ENCODE measurements at regions of chr6 and their contacts with region 1.

Region 1: DNA sequence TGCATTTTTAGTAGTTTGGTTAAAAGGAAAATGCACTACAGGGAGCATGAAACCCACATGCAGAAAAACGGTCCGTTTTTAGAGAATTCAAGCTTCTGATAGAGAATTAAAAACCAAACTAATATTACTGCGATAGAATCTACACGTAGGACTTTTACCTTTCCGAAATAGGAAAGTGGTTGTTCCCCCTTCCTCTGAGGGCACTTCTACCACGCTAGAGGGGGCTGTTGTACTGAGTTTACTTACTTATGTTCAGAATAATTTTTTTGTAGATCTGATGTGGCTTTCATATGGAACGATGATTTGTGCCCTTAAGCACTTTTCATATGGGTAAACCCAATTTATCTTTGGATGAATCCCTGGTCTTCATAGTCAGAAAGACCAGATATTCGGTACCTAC is 264.3 kb upstream of the PLN start:
- DNase-seq: peak in 4 of 5 donors; percentile 28 to 62 (median 33)
- H3K4me3 ChIP-seq: no peak overlapping the region
- H3K27ac ChIP-seq: no peak overlapping the region
- H3K4me1 ChIP-seq: no peaks in the 10 kb centered on the region
- H3K27me3 ChIP-seq: no peaks in the 10 kb centered on the region
- CTCF ChIP-seq: peak; percentile 36 to 64 (median 42)
- EP300 ChIP-seq: no peak
- POLR2A ChIP-seq: no peak

Region 2: DNA sequence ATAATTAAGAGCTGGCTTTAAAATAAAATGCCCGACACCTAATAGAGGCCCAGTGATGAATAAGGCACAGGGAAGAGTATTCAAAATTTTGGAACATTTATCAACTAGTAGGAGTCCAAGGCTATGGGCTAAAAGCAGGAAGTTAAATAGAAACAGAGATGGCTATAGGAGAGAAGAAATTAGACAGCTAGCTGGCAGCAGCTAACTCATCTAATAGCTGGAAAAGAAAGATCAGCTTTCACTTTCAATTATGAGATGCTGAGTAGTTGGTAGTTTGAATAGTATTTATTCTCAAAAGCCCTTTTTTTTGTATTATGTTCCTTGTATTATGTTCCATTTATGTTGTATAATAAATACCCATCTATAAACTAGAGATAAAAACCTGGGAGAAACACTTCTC is 161.0 kb before region 1 on chr6:
- intact Hi-C with region 1: no loop called
- DNase-seq: no peak
- H3K4me3 ChIP-seq: no peak overlapping the region
- H3K27ac ChIP-seq: no peak overlapping the region
- H3K4me1 ChIP-seq: no peaks in the 10 kb centered on the region
- H3K27me3 ChIP-seq: no peaks in the 10 kb centered on the region
- CTCF ChIP-seq: no peak
- EP300 ChIP-seq: no peak
- POLR2A ChIP-seq: no peak

Region 3: GRCh38 chr6:118509009-118509617 is 225.3 kb after region 1 on chr6:
- intact Hi-C with region 1: loop called in 1 of 4 experiments (anchors 2 kb)
- DNase-seq: no peak
- H3K4me3 ChIP-seq: no peak overlapping the region
- H3K27ac ChIP-seq: no peak overlapping the region
- H3K4me1 ChIP-seq: no peaks in the 10 kb centered on the region
- H3K27me3 ChIP-seq: no peaks in the 10 kb centered on the region
- CTCF ChIP-seq: peak in 1 of 3 donors; percentile 25
- EP300 ChIP-seq: no peak
- POLR2A ChIP-seq: no peak

Region 4: DNA sequence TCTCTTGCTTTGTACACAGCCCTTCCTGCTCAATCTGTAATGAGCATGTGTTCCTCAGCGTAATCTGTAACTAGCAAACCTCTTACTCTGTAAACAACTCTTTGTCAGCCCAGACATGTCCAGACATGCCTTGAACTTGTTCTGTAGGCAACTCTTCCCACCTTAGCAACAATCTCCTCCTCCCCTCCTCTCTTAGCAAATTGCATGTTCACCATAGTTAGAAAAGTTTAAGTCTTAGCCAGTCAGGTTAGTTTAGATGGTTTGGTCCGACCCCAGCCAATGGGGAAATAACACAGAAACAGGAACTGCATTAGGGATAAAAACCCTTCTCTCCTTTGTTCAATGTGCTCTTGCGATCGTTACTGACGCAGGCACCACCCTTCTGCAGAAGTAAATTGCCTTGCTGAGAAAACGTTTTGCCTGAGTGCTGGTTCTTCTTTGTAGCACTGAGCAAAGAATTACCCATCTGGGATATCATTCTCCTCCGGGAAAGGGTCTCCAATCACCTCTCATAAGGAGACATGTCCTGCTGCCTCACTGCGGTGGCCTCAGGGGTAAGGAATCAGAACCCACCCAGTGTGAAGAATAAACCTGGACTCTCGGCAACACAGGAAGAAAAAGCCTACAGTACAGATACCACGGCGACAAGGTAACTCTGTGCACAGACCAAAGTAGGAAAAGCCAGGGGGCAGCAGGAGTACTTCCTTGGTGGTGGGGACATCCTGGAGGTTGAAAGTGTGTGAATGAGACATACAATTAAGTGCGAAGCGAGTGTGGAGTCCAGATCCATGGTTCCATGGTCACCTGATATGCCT is 290.5 kb after region 1 on chr6:
- intact Hi-C with region 1: loop called in 1 of 4 experiments (anchors 10 kb)
- DNase-seq: no peak
- H3K4me3 ChIP-seq: no peak overlapping the region
- H3K27ac ChIP-seq: no peak overlapping the region
- H3K4me1 ChIP-seq: no peaks in the 10 kb centered on the region
- H3K27me3 ChIP-seq: no peaks in the 10 kb centered on the region
- CTCF ChIP-seq: no peak
- EP300 ChIP-seq: no peak
- POLR2A ChIP-seq: no peak

Region 5: DNA sequence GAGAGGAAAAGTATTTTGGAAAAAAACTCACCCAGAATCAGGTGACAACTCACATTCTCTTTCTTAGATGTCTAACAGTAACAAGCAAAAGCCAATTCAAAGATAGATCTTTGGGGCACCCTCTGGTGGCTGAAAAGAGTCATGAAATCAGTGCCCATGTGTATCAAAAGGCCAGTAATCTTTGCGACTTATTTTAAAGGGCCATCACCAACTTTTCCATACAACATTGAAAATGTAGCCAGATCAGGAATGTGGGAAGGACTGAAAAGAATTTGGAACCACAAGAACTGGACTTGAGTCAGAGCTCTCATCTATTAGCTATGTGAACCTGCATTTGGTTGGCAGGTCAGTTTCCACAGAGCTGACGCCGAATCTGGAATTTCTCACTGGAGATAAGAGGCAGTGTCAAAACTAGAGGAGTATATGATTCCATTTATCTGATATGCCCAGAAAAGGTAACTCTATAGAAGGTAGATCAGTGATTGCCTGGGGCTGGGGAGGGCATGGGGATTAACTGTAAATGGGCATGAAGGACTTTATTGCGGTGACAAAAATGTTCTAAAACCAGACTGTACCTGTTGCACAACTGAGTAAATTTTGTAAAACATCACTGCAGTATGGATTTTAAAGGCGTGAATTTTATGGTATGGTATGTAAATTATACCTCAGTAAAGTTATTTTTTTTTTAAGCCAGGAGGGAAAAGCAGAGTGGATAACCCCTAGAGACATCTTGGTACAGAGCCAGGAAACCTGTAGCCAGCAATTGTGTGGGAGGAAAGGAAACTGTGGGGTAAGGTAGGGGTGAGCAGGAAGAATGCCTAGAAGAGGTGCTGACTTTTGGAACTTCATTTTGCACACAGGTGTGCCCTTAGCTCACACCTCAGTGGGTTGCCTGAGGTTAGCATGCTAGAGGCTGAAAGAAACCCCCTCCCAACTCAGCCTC is 493.1 kb after region 1 on chr6:
- intact Hi-C with region 1: loop called in 1 of 4 experiments (anchors 10 kb)
- DNase-seq: peak; percentile 44 to 68 (median 54)
- H3K4me3 ChIP-seq: no peak overlapping the region
- H3K27ac ChIP-seq: no peak overlapping the region
- H3K4me1 ChIP-seq: peaks cover 2% of the 10 kb centered on the region
- H3K27me3 ChIP-seq: no peaks in the 10 kb centered on the region
- CTCF ChIP-seq: peak in 2 of 3 donors; percentile 61 to 67
- EP300 ChIP-seq: no peak
- POLR2A ChIP-seq: no peak

Region 6: DNA sequence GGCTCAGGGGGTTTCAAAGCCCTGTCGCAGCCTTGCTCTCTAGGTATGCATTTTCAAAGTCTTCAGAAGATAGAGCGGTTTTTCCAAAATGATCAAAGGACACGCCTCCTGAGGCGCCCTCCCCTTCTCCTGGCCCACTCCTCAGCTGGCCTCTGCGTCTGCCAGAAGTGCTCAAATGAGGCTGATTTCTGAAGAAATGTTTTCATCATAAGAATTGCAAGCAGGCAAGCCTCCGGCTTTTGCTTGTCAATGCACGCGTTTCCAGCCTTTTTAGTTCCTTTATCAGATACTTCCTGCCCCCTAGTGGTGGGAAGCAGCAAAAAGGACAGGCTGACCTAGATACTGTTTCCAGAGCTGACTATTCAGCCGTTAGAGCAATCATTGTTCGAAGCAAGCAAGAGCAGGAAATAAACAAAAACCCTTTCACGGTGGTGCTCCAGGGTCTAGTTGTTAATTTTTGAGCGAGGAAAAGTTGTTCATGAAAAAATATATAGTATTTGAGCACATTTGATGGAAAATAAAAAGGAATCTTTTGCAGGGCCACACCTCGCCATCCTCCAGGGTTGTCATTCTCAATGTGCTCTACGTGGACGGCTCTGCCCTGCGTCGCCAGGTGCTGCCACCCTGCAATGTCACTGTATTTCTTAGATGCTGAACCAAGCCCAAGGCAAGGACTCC is 516.8 kb after region 1 on chr6:
- intact Hi-C with region 1: loop called in 2 of 4 experiments (anchors 5 to 10 kb)
- DNase-seq: peak; percentile 68 to 84 (median 78)
- H3K4me3 ChIP-seq: no peak overlapping the region
- H3K27ac ChIP-seq: no peak overlapping the region
- H3K4me1 ChIP-seq: no peaks in the 10 kb centered on the region
- H3K27me3 ChIP-seq: no peaks in the 10 kb centered on the region
- CTCF ChIP-seq: peak; percentile 61 to 87 (median 73)
- EP300 ChIP-seq: no peak
- POLR2A ChIP-seq: no peak

Region 7: DNA sequence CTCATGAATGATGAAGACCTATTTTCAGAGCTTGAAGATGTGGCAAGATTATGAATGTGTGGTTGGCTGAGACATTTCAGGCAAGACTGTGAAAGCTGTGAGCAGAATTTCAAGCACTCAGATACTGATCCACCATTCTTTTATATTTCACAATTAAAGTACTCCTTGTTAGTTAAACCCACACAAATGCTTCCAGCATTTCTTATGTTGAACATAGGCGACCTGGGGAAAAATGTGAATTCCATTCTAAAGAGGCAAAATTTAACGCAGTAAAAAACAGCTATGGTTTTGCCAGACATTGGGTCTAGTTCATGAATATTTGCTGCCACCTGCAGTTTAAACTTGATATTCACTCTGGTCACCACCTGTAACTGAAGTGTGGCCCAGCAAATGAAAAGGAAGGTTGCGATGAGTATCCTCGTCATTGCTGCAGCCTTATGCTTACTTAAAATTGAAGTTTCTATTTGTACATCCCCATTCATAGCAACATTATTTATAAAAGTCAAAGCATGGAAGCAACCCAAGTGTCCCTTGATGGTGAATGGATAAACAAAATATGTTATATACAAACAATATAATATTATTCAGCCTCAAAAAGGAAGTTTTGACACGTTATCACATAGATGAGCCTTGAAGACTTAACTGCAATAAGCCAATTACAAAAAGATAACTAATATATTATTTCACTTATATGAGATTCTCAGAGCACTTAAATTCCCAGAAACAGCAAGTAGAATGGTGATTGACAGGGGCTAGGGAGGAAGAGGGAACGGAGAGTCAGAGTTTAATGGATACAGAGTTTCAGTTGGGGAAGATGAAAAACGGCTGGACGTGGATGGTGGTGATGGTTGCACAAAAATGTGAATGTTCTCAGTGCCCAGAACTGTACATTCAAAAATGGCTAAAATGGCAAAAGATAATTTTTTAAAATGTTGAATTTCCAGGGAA is 827.1 kb after region 1 on chr6:
- intact Hi-C with region 1: no loop called
- DNase-seq: peak in 2 of 5 donors; percentile 16 to 44
- H3K4me3 ChIP-seq: no peak overlapping the region
- H3K27ac ChIP-seq: no peak overlapping the region
- H3K4me1 ChIP-seq: no peaks in the 10 kb centered on the region
- H3K27me3 ChIP-seq: no peaks in the 10 kb centered on the region
- CTCF ChIP-seq: peak; percentile 32 to 76 (median 56)
- EP300 ChIP-seq: no peak
- POLR2A ChIP-seq: no peak